ENCODE measurements at regions of chr14 and their contacts with region 1.

Region 1: DNA sequence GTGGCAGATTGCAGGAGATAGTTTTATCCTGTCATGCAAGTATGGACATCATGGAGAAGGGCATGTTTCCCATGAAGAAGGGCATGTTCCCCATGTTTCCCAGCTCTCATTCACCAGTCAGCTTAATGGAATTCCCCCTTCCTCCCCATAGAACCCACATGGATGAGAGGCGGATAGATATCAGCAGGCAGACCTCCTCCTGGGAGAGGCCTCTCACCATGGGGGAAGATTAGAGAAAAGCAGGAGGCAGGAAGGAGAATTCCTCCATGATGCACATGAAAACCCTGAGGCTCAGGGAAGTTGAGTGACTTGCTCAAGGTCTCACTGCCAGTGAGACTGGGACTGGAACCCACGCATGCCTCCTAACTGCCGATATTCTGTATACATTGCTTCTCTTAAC is 92.9 kb upstream of the FOXN3 start:
- DNase-seq: no peak
- H3K4me3 Mint-ChIP-seq: peak overlapping the region; percentile 79
- H3K27ac Mint-ChIP-seq: peak overlapping the region; percentile 93
- H3K4me1 Mint-ChIP-seq: peaks cover 70% of the 10 kb centered on the region
- H3K27me3 Mint-ChIP-seq: no peaks in the 10 kb centered on the region

Region 2: GRCh38 chr14:89139404-89140247 is 370.3 kb before region 1 on chr14:
- CTCF ChIA-PET with region 1: no interaction called
- intact Hi-C with region 1: no loop called
- DNase-seq: no peak
- H3K4me3 Mint-ChIP-seq: no peak overlapping the region
- H3K27ac Mint-ChIP-seq: no peak overlapping the region
- H3K4me1 Mint-ChIP-seq: no peaks in the 10 kb centered on the region
- H3K27me3 Mint-ChIP-seq: no peaks in the 10 kb centered on the region

Region 3: GRCh38 chr14:89445273-89445973 is 64.5 kb before region 1 on chr14:
- CTCF ChIA-PET with region 1: no interaction called
- intact Hi-C with region 1: loop called (anchors 1 kb)
- DNase-seq: peak; percentile 65
- H3K4me3 Mint-ChIP-seq: no peak overlapping the region
- H3K27ac Mint-ChIP-seq: peak overlapping the region; percentile 79
- H3K4me1 Mint-ChIP-seq: peaks cover 60% of the 10 kb centered on the region
- H3K27me3 Mint-ChIP-seq: no peaks in the 10 kb centered on the region

Region 4: DNA sequence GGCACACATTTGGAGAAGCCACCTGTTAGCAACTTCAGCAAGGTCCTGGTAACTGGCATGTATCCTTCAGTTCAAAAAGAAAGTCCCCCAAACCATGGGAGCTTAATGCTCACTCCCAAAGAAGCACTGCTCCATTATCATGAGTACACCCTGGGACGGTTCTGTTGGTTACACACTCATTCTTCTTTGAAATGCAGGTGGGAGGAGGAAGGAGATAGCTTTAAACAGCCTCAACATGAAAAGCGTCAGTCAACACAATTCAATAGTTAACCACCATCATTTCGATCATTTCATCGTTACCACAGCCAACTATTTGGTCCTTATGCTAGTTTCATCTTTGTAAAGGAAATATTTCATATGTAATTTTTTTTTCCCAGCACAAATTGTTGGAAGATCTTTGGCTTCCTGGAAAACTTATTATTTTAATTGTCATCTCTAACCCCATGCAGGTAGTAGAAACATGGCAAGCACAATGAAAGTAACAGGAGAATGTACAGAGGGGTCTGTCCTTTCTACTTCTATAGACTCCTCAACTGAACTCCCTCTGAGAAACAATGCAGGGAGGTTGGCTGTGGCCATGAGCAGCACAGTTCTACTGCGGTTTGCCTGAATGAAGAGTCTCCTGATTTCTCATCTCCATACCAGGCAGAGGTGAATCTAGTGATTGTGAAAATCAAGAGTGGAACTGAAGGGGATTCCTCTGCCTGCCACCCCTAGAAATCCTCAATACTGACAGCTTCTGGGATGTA is 103.5 kb after region 1 on chr14:
- CTCF ChIA-PET with region 1: no interaction called
- intact Hi-C with region 1: loop called (anchors 1 kb)
- DNase-seq: peak; percentile 70
- H3K4me3 Mint-ChIP-seq: peak overlapping the region; percentile 46
- H3K27ac Mint-ChIP-seq: peak overlapping the region; percentile 84
- H3K4me1 Mint-ChIP-seq: peaks cover 78% of the 10 kb centered on the region
- H3K27me3 Mint-ChIP-seq: no peaks in the 10 kb centered on the region

Region 5: DNA sequence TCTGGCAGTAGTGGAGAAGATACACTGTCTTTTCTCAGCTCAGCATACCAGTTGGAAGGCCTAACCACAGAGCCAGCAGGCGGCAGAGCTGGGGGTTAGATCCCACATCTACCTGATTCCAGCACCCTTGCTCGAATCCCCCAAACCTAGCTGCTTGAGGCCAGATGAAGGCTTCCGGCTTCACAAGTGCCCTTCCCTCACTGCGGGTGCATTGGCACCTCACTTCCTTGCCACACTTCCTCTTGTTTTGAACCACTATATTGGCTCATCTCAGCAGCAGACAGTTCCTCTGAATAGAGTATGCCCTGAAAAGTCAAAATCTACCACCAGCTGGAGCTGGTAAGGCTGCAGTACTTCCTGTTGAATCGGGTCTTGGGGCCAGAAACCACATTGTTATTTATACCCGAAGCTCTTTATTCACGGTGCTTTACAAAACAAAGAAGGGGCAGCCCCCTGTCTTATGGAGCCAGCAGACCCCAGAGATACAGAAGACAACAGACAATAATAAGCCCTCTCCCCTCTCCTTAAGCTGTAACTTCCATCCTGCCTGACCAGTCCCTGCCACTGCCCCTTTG is 210.9 kb after region 1 on chr14:
- CTCF ChIA-PET with region 1: no interaction called
- intact Hi-C with region 1: loop called (anchors 1 kb)
- DNase-seq: peak; percentile 76
- H3K4me3 Mint-ChIP-seq: peak overlapping the region; percentile 32
- H3K27ac Mint-ChIP-seq: peak overlapping the region; percentile 95
- H3K4me1 Mint-ChIP-seq: peaks cover 68% of the 10 kb centered on the region
- H3K27me3 Mint-ChIP-seq: no peaks in the 10 kb centered on the region

Region 6: GRCh38 chr14:89767861-89768268 is 258.0 kb after region 1 on chr14:
- CTCF ChIA-PET with region 1: no interaction called
- intact Hi-C with region 1: loop called (anchors 5 kb)
- DNase-seq: peak; percentile 86
- H3K4me3 Mint-ChIP-seq: peak overlapping the region; percentile 26
- H3K27ac Mint-ChIP-seq: peak overlapping the region; percentile 74
- H3K4me1 Mint-ChIP-seq: peaks cover 31% of the 10 kb centered on the region
- H3K27me3 Mint-ChIP-seq: no peaks in the 10 kb centered on the region

Measured in activated naive CD4-positive, alpha-beta T cell treated with anti-CD3 and anti-CD28 coated beads for 36 hours (primary cell).